ENCODE measurements at regions of chr7 and their contacts with region 1.

Region 1: DNA sequence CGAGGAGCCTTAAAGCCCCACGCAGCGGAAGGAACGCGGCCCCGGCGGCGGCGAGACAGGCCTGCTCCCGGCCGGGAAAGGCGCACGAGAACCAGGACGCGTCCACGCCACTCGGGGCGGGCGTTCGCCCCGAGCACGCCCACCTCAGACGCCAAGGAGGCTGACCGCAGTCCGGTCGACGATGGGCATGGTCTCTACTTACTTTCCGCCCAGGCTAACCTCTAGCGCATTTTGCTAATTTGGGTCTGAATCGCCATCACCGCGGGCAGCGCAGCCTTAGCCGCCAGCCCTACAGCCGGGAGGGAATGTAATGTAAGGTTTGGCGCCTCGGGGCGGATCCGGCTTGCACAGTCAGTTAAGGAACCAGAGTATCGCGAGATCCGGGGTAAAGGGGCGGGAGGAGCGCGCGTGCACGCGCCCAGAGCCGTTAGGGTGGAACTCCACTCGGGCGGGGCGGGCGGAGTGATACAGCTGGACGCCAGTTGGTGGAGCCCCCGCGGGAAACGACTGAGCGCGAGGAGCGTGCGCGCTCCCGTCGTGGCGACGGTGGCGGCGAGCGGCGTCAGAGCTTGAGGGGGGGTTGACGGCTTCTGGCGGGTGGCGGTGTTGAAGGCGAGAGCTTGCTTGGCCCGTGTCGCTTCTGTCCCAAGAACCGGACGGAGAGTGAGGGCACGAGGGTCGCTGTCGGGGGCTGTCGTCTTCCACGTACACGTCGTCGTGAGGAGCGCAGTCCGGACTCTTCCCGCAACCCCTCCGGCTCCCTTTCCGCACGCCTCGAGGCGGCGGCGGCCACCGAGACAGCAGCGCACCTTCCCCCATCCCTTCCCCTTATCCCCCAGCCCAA is at the start of gene LUC7L2:
- DNase-seq: peak; percentile 100
- ATAC-seq: peak; percentile 75
- H3K4me3 Mint-ChIP-seq: peak within 1 kb of the TSS; percentile 99
- H3K27ac Mint-ChIP-seq: peak within 1 kb of the TSS; percentile 98
- H3K4me1 Mint-ChIP-seq: peaks cover 25% of the 10 kb centered on the region
- H3K27me3 Mint-ChIP-seq: no peaks in the 10 kb centered on the region
- total RNA-seq, gene LUC7L2: 124 to 126 TPM

Region 2: GRCh38 chr7:139109188-139109982 is 250.2 kb before region 1 on chr7 and contains the start of gene ZC3HAV1:
- CTCF ChIA-PET with region 1: no interaction called
- POLR2A ChIA-PET with region 1: interaction called, 4 read pairs
- intact Hi-C with region 1: loop called (anchors 1 to 2 kb)
- DNase-seq: peak; percentile 93
- ATAC-seq: peak; percentile 73
- H3K4me3 Mint-ChIP-seq: peak within 1 kb of the TSS; percentile 99
- H3K27ac Mint-ChIP-seq: peak within 1 kb of the TSS; percentile 96
- H3K4me1 Mint-ChIP-seq: peaks cover 27% of the 10 kb centered on the region
- H3K27me3 Mint-ChIP-seq: no peaks in the 10 kb centered on the region
- total RNA-seq, gene ZC3HAV1: 110 to 120 TPM

Region 3: GRCh38 chr7:139340037-139340807 is 19.4 kb before region 1 on chr7:
- CTCF ChIA-PET with region 1: interaction called, 9 read pairs
- POLR2A ChIA-PET with region 1: interaction called, 17 read pairs
- intact Hi-C with region 1: loop called (anchors 1 kb)
- DNase-seq: peak; percentile 99
- ATAC-seq: peak; percentile 79
- H3K4me3 Mint-ChIP-seq: peak overlapping the region; percentile 97
- H3K27ac Mint-ChIP-seq: peak overlapping the region; percentile 99
- H3K4me1 Mint-ChIP-seq: peaks cover 23% of the 10 kb centered on the region
- H3K27me3 Mint-ChIP-seq: peaks cover 2% of the 10 kb centered on the region

Region 4: GRCh38 chr7:139680676-139681462 is 321.3 kb after region 1 on chr7:
- CTCF ChIA-PET with region 1: no interaction called
- POLR2A ChIA-PET with region 1: interaction called, 3 read pairs
- intact Hi-C with region 1: loop called in 1 of 2 experiments (anchors 5 kb)
- DNase-seq: peak; percentile 94
- ATAC-seq: peak; percentile 73
- H3K4me3 Mint-ChIP-seq: peak overlapping the region; percentile 68
- H3K27ac Mint-ChIP-seq: peak overlapping the region; percentile 98
- H3K4me1 Mint-ChIP-seq: peaks cover 53% of the 10 kb centered on the region
- H3K27me3 Mint-ChIP-seq: no peaks in the 10 kb centered on the region

Region 5: DNA sequence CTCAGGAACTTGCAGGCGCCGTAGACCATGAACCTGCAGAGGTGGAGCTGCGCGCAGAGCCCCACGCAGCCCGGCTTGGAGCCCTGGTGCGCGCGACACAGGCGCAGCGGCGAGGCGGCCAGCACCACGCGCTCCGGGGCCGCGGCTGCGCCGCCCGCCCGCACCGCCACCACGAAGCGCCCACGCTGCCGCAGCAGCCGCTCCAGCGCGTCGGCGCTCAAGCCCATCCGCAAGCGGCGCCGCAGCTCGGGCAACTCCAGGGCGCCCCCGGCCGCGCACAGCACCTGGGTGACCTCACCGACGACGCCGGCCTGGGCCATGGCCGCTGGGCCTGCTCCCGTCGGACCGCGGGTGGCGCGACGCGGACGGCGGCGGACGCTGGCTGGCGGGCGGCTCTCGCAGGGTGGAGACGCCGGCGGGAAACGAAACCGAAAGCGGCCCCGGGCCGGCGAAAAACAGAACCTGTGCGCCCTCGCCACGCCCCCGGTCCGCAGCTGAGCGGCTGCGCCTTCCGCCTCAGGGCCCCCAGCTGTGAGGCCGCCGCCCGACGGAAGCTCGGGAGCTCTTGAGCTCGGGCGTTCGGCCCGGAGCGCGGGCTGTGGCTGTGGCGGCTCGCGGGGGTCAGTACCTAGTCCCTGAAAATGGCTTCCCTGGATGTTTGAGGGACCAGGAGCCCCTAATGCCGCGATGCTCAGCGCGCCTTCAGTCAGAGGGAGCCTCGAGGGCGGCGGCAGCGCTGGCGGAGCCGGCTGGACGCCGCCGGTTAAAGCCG is 703.1 kb after region 1 on chr7 and contains the start of gene PARP12:
- CTCF ChIA-PET with region 1: no interaction called
- POLR2A ChIA-PET with region 1: no interaction called
- intact Hi-C with region 1: loop called in 1 of 2 experiments (anchors 5 kb)
- DNase-seq: peak; percentile 91
- ATAC-seq: peak; percentile 65
- H3K4me3 Mint-ChIP-seq: peak within 1 kb of the TSS; percentile 78
- H3K27ac Mint-ChIP-seq: peak within 1 kb of the TSS; percentile 75
- H3K4me1 Mint-ChIP-seq: peaks cover 36% of the 10 kb centered on the region
- H3K27me3 Mint-ChIP-seq: no peaks in the 10 kb centered on the region
- total RNA-seq, gene PARP12: 25.7 to 28.7 TPM

Region 6: GRCh38 chr7:140375892-140376730 is 1016.5 kb after region 1 on chr7:
- CTCF ChIA-PET with region 1: no interaction called
- POLR2A ChIA-PET with region 1: no interaction called
- intact Hi-C with region 1: loop called in 1 of 2 experiments (anchors 2 kb)
- DNase-seq: peak; percentile 45
- ATAC-seq: peak; percentile 90
- H3K4me3 Mint-ChIP-seq: peak overlapping the region; percentile 57
- H3K27ac Mint-ChIP-seq: peak overlapping the region; percentile 95
- H3K4me1 Mint-ChIP-seq: peaks cover 53% of the 10 kb centered on the region
- H3K27me3 Mint-ChIP-seq: no peaks in the 10 kb centered on the region